WTC11 (cell line): ENCODE measurements at regions of chr11 and their contacts with region 1.

Region 1: GRCh38 chr11:133239575-133239974 is 292.7 kb downstream of the OPCML start:
- DNase-seq: no peak
- ATAC-seq: peak; percentile 59
- H3K4me3 Mint-ChIP-seq: no peak overlapping the region
- H3K27ac Mint-ChIP-seq: no peak overlapping the region
- H3K4me1 Mint-ChIP-seq: peaks cover 59% of the 10 kb centered on the region
- H3K27me3 Mint-ChIP-seq: no peaks in the 10 kb centered on the region; the same call in 1 of the 2 replicates
- CTCF ChIP-seq: no peak

Region 2: GRCh38 chr11:132988411-132988810 is 251.2 kb before region 1 on chr11:
- CTCF ChIA-PET with region 1: no interaction called
- POLR2A ChIA-PET with region 1: no interaction called
- DNase-seq: no peak
- ATAC-seq: no peak
- H3K4me3 Mint-ChIP-seq: no peak overlapping the region
- H3K27ac Mint-ChIP-seq: no peak overlapping the region
- H3K4me1 Mint-ChIP-seq: peaks cover 18% of the 10 kb centered on the region
- H3K27me3 Mint-ChIP-seq: peaks cover 25% of the 10 kb centered on the region
- CTCF ChIP-seq: no peak

Region 3: DNA sequence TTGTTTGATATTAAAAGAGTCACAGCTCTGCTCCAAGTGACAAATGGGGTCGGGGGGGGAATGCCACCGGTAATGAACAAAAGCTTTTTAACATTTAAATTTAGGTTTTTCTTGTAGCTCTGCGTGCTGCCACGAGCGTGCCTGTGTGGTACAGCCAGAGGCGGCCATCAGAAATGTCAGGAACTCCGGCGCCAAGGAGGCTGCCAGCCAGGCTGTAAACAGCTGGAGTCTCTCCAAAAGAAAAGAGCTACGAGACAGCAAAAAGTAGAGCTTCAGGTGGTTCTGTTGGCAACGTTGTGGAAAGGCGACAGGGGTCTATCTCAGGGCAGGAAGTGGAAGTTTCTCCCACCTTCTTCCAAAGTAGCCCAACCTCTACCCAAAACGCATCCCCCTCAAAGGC is 240.1 kb before region 1 on chr11:
- CTCF ChIA-PET with region 1: no interaction called
- POLR2A ChIA-PET with region 1: no interaction called
- DNase-seq: no peak
- ATAC-seq: peak; percentile 48; the same call in 1 of the 2 replicates
- H3K4me3 Mint-ChIP-seq: no peak overlapping the region
- H3K27ac Mint-ChIP-seq: no peak overlapping the region
- H3K4me1 Mint-ChIP-seq: peaks cover 19% of the 10 kb centered on the region
- H3K27me3 Mint-ChIP-seq: peaks cover 36% of the 10 kb centered on the region
- CTCF ChIP-seq: no peak

Region 4: GRCh38 chr11:133123366-133123765 is 116.2 kb before region 1 on chr11:
- CTCF ChIA-PET with region 1: no interaction called
- POLR2A ChIA-PET with region 1: no interaction called
- DNase-seq: no peak
- ATAC-seq: no peak
- H3K4me3 Mint-ChIP-seq: no peak overlapping the region
- H3K27ac Mint-ChIP-seq: no peak overlapping the region
- H3K4me1 Mint-ChIP-seq: peaks cover 14% of the 10 kb centered on the region
- H3K27me3 Mint-ChIP-seq: no peaks in the 10 kb centered on the region; the same call in 1 of the 2 replicates
- CTCF ChIP-seq: no peak

Region 5: GRCh38 chr11:133228471-133229329 is 10.9 kb before region 1 on chr11:
- CTCF ChIA-PET with region 1: interaction called, 11 read pairs
- POLR2A ChIA-PET with region 1: interaction called, 3 read pairs
- DNase-seq: peak; percentile 82
- ATAC-seq: peak; percentile 84
- H3K4me3 Mint-ChIP-seq: peak overlapping the region; percentile 36
- H3K27ac Mint-ChIP-seq: no peak overlapping the region
- H3K4me1 Mint-ChIP-seq: peaks cover 49% of the 10 kb centered on the region
- H3K27me3 Mint-ChIP-seq: peaks cover 47% of the 10 kb centered on the region
- CTCF ChIP-seq: no peak

Region 6: DNA sequence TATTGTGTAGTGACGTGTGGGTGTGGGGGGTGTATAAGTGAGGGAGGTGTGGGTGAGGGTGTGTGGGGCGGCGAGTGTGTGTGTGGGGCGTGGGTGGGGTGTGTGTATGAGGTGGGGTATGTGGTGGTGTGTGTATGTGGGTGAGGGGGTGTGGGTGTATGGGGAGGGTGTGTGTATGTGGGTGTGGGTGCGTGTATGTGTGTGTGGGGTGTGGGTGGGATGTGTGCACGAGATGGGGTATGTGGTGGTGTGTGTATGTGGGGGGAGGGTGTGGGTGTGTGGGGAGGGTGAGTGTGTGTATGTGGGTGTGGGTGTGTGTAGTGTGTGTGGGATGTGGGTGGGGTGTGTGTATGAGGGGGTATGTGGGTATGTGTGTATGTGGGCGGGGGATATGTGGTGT is 87.3 kb after region 1 on chr11:
- CTCF ChIA-PET with region 1: no interaction called
- POLR2A ChIA-PET with region 1: no interaction called
- DNase-seq: no peak
- ATAC-seq: no peak
- H3K4me3 Mint-ChIP-seq: no peak overlapping the region
- H3K27ac Mint-ChIP-seq: no peak overlapping the region
- H3K4me1 Mint-ChIP-seq: peaks cover 11% of the 10 kb centered on the region
- H3K27me3 Mint-ChIP-seq: no peaks in the 10 kb centered on the region; the same call in 1 of the 2 replicates
- CTCF ChIP-seq: no peak